ENCODE measurements at regions of chr6 and their contacts with region 1.

Region 1: GRCh38 chr6:119349323-119350042 is at the start of gene MAN1A1:
- DNase-seq: peak; percentile 85 to 97 (median 89)
- ATAC-seq: peak; percentile 83 to 89 (median 88)
- H3K4me3 ChIP-seq: peak within 1 kb of the TSS; percentile 90 to 97 (median 95)
- H3K27ac ChIP-seq: peak within 1 kb of the TSS; percentile 77 to 99 (median 90)
- H3K4me1 ChIP-seq: peaks cover 11 to 15% (median 12%) of the 10 kb centered on the region in 3 donors
- H3K27me3 ChIP-seq: no peaks in the 10 kb centered on the region
- CTCF ChIP-seq: no peak
- total RNA-seq, gene MAN1A1: 19.1 to 86.1 (median 35.7) TPM

Region 2: DNA sequence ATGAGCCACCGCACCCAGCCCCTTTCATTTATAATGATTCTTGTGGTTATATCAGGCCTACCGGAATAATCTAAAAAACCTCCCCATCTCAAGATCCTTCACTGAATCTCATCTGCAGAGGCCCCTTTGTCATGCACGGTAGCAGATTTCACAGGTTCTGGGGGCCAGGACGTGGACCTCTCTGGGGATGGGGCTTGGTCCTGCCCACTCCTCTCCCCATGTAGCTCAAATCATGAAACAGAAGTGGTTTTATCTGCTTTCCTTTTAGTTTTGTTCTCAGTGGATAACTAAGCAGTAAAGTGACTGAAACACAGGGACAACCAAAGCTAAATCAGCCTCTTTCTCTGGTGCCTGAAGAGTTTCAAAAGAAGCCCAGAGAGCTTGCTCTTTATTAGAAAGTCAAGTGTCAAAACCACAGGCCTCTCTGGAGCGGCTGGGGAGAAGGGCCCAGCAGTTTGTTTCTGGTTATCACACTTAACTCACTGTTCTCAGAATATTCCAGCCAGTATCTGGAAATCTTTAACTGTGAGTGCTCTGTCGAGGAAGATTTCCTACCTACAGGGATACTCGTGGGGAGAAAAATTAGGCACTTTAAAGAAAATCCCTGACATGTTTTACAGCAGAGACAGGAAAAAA is 210.5 kb before region 1 on chr6:
- intact Hi-C with region 1: loop called in 1 of 3 experiments (anchors 5 kb)
- DNase-seq: no peak
- ATAC-seq: no peak
- H3K4me3 ChIP-seq: no peak overlapping the region
- H3K27ac ChIP-seq: no peak overlapping the region
- H3K4me1 ChIP-seq: no peaks in the 10 kb centered on the region
- H3K27me3 ChIP-seq: no peaks in the 10 kb centered on the region
- CTCF ChIP-seq: no peak

Region 3: GRCh38 chr6:119172824-119173223 is 176.7 kb before region 1 on chr6:
- intact Hi-C with region 1: no loop called
- DNase-seq: no peak
- ATAC-seq: peak in 1 of 4 donors; percentile 32
- H3K4me3 ChIP-seq: no peak overlapping the region
- H3K27ac ChIP-seq: no peak overlapping the region
- H3K4me1 ChIP-seq: peaks cover 0 to 18% (median 8%) of the 10 kb centered on the region in 3 donors
- H3K27me3 ChIP-seq: no peaks in the 10 kb centered on the region
- CTCF ChIP-seq: no peak

Region 4: GRCh38 chr6:119463081-119463626 is 113.7 kb after region 1 on chr6:
- intact Hi-C with region 1: no loop called
- DNase-seq: no peak
- ATAC-seq: no peak
- H3K4me3 ChIP-seq: no peak overlapping the region
- H3K27ac ChIP-seq: no peak overlapping the region
- H3K4me1 ChIP-seq: no peaks in the 10 kb centered on the region
- H3K27me3 ChIP-seq: no peaks in the 10 kb centered on the region
- CTCF ChIP-seq: no peak